GM10248 (cell line): ENCODE measurements at regions of chr1 and their contacts with region 1.

Region 1: DNA sequence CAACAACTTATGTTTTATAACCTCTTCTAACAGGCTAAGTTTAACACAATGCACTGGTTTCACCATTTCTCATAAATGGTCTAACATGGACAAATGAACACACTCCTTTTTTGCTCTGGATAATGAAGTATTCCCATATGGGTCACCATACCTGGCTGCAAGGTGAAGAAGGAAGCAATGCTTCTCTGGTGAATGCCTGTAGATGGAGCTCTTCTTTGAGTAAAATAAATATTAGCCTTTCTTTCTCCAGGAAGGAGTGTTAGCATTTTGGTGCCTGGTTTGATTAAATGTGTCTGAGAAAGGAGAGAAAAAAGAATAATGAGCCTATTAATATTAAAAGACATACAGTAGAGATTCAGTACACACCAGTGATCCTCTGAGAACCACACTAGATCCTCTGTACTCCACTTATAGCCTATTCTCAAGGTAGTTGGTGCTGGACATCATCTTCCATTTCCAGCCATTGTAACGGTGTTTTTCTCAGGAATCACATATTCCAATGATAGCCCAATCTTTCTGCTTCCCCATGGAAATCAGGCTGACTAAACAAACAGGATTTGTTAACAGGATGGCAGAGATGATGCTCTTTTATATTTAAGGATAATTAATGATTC is 17.6 kb downstream of the MTFR1L start:
- DNase-seq: no peak
- CTCF ChIP-seq: peak; percentile 53

Region 2: DNA sequence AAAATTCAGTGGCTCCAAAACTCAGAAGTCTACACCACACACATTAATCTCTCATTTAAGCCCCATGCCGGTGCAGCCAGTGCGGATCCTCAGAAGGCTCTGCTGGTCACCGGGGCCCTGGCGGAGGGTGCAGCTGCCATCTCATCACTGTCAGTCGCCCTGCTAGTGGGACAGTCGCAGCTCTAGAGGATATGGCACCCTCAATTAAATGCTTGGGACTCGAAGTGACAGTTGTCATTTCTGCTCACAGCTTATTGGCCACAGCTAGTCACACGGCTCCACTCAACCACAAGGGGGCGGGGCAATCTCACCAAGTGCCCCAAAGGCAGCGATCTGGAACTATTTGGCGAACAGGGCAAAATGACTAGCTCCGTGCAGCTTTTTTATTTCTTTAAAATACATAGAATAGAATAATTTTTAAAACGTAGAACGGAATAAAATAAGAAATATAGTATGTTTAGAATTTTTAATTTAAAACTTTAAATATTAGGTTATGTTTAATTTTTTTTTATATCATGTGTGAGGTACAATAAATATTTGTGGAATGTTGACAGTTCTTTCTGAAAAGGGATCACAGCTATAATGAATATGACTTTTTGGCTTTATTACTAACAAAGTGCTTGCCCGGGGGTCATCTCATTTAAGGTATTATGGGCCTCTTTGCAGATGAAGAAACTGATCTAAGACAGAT is 228.7 kb before region 1 on chr1:
- CTCF ChIA-PET with region 1: no interaction called
- POLR2A ChIA-PET with region 1: no interaction called
- DNase-seq: peak; percentile 80
- CTCF ChIP-seq: peak; percentile 77

Region 3: DNA sequence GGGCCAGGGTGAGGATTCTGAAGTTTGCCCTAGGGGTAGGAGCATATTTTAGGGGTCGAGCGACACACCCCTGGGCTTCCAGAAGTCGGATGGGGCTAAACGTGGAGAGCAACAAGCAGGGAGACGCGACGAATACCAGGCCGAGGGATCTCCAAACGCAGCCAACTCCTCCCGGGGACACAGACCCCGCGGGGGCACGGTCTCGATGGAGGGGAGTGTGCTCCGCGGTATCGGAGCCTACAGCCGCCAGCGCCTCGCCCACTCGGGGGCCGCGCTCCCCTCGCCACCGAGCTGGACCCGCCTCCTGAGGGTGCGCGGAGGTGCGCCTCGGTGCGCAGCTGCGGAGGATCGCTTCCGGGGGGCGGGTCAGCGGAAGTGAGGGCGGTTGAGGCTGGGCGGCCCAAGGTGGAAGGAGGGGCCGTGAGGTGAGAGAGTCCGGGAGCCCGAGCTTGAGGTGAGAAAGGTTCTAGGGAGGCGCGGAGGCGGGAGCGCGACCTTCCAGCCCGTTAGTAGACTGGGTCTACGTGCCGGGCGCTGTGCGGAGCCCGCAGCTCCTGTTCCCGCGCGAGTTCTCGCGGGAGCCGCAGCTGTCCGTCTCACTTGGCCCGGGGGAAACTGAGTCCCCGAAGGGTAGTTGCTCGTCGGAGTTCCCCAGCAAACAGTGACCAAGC is 17.7 kb before region 1 on chr1 and contains the start of gene MTFR1L:
- CTCF ChIA-PET with region 1: interaction called, 17 read pairs
- POLR2A ChIA-PET with region 1: no interaction called
- DNase-seq: peak; percentile 98
- CTCF ChIP-seq: no peak

Region 4: DNA sequence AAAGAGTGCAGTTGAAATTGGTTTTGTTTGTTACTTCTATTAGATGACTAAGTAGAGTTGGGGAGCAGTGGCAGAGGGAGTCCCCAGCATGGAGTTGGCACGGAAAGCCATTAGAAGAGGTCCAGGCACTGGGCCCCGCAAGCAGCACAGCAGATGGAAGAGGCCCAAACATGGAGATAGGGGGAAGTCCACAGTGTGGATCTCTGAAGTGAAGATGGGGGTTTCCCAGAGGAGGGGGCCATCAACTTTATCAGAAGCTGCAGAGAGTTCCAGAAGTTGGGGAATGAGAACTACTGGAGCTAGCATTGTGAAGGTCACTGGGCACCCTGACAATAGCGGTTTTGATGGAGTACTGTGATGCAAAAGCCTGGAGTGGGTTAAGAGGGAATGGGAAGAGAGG is 129.9 kb after region 1 on chr1:
- CTCF ChIA-PET with region 1: no interaction called
- POLR2A ChIA-PET with region 1: no interaction called
- DNase-seq: no peak
- CTCF ChIP-seq: no peak